Common myeloid progenitor, CD34-positive (primary cell): ENCODE measurements at regions of chr3 and their contacts with region 1.

Region 1: DNA sequence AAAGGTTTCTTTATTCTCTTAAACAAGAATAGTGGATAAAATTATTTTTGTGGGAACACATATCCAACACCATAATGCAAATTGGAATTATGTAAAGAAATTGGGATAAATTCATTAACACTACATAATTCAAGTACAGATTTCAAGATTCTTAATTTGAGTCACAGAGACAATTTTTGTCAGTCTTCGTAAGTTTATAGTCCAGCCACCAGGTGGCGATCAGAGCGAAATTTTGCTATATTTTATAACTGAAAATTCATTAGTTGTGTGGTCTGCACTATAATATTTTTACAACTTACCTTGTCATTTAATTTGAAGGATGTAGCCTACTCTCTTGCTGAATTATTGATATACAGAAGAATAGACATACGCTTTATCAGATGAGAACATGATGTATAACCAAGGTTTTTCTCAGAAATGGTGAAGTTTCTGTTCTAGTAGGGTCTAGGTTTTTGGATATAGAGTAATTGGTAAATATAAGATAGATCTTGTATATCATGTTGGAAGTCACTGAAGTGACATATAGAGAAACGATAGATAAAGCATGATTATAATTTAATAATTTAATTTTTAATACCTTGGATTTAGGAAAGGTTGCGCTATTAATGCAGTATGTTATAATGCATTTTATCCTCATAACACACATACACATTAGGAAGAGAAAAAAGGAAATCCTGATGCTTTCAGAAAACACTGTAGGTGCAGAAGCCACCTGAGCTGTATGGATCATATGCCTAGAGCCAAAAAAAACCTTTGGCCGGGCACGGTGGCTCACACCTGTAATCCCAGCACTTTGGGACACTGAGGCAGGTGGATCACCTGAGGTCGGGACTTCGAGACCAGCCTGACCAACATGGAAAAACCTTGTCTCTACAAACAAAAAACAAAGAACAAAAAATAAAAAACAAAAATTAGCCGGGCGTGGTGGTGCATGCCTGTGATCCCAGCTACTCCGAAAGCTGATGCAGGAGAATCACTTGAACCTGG is 31.7 kb downstream of the PLSCR4 start:
- DNase-seq: peak; percentile 41 to 71 (median 54)
- H3K4me3 ChIP-seq: no peak overlapping the region
- H3K27ac ChIP-seq: no peak overlapping the region
- H3K4me1 ChIP-seq: no peaks in the 10 kb centered on the region
- H3K27me3 ChIP-seq: no peaks in the 10 kb centered on the region

Region 2: DNA sequence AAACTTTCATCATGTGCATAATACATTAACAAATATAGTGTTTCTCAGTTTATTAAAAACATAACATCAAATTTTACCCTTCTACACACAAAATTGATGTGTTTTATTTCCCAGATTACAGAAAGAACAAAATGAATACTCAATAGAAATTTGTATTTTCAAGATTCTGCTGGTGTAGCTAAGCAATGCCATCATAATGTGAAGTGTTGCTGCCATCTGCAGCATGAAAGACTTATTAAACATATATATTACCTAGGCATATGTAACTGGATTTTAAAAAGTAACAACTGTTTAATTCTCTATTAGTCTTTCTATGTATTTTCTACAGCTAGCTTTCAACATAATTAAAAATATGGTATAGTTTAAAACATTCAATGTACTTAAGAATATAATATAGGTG is 358.5 kb after region 1 on chr3:
- CTCF ChIA-PET with region 1: interaction called, 10 read pairs
- POLR2A ChIA-PET with region 1: no interaction called
- DNase-seq: peak; percentile 54 to 83 (median 77)
- H3K4me3 ChIP-seq: no peak overlapping the region
- H3K27ac ChIP-seq: no peak overlapping the region
- H3K4me1 ChIP-seq: no peaks in the 10 kb centered on the region
- H3K27me3 ChIP-seq: no peaks in the 10 kb centered on the region